ENCODE measurements at regions of chr1 and their contacts with region 1.

Region 1: GRCh38 chr1:201709564-201710295 is 119.2 kb upstream of the IPO9 start:
- DNase-seq: peak; percentile 87
- H3K4me3 ChIP-seq: no peak overlapping the region
- H3K27ac ChIP-seq: peak overlapping the region; percentile 62 to 98; a peak in 3 of 4 replicates
- H3K4me1 ChIP-seq: peaks cover 19 to 71% of the 10 kb centered on the region in 2 experiments; a peak in 3 of 4 replicates
- H3K27me3 ChIP-seq: no peaks in the 10 kb centered on the region
- CTCF ChIP-seq: peak; percentile 86
- EP300 ChIP-seq: no peak
- RAD21 ChIP-seq: peak; percentile 86

Region 2: DNA sequence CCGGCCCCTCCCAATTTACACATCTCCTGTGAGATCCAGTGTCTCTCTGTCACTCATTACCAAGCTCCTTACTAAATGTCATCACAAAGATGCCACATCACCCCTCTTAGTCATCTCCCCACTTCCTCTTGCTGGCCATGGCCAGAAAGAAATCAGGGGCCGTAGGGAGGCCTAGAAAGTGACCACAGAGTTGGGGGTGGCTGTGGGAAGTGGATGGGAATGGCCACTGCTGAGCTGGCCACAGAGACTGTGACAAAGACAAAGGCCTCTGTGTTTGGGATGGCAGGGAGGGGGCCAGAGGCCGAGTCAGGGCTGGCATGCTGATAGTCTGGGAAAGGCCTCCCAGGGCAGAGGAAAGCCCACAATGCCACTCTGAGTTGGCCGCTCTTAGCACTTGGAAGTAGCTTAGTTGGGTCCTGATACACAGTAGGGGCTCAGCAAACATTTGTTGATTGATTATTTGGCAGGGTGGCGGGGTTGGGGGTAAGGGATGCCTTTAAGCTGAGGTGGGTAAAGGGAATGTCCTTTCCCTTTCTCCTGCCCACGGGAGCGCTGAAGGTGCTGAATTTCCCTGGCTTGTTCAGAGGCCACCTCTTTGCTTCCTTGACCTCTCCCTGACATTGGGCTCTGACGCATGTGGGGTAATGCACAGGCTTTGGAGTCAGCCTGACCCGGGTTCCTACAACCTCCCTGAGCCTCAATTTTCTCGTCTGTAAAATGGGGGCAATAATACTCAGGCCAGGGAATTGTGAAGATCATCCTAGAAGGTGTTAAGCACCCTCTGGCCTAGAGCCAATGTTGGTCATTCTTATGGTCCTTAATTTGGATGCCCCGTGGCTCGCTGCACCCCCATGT is 157.6 kb before region 1 on chr1:
- CTCF ChIA-PET with region 1: interaction called, 397 read pairs
- POLR2A ChIA-PET with region 1: no interaction called
- DNase-seq: no peak
- H3K4me3 ChIP-seq: 0 out of 4 replicates have a peak overlapping the region, but pooled peaks of 1 of the 2 experiments have one; percentile 1
- H3K27ac ChIP-seq: peak overlapping the region; percentile 66 to 95
- H3K4me1 ChIP-seq: peaks cover 36 to 53% of the 10 kb centered on the region in 2 experiments
- H3K27me3 ChIP-seq: no peaks in the 10 kb centered on the region
- CTCF ChIP-seq: no peak
- EP300 ChIP-seq: peak in 1 of 2 experiments; percentile 50; a peak in 1 of 4 replicates
- RAD21 ChIP-seq: no peak

Region 3: GRCh38 chr1:201696217-201696761 is 13.4 kb before region 1 on chr1:
- CTCF ChIA-PET with region 1: interaction called, 36 read pairs
- POLR2A ChIA-PET with region 1: no interaction called
- DNase-seq: peak; percentile 76
- H3K4me3 ChIP-seq: no peak overlapping the region
- H3K27ac ChIP-seq: peak overlapping the region; percentile 97
- H3K4me1 ChIP-seq: peaks cover 56 to 67% of the 10 kb centered on the region in 2 experiments
- H3K27me3 ChIP-seq: no peaks in the 10 kb centered on the region
- CTCF ChIP-seq: no peak
- EP300 ChIP-seq: peak; percentile 66 to 70; a peak in 2 of 4 replicates
- RAD21 ChIP-seq: no peak

Region 4: GRCh38 chr1:201748335-201748734 is 38.6 kb after region 1 on chr1:
- CTCF ChIA-PET with region 1: interaction called, 20 read pairs
- POLR2A ChIA-PET with region 1: no interaction called
- DNase-seq: no peak
- H3K4me3 ChIP-seq: no peak overlapping the region
- H3K27ac ChIP-seq: peak overlapping the region; percentile 83 to 98
- H3K4me1 ChIP-seq: peaks cover 35 to 71% of the 10 kb centered on the region in 2 experiments
- H3K27me3 ChIP-seq: no peaks in the 10 kb centered on the region
- CTCF ChIP-seq: no peak
- EP300 ChIP-seq: peak; percentile 10 to 89; a peak in 2 of 4 replicates
- RAD21 ChIP-seq: no peak

Region 5: GRCh38 chr1:201800246-201800645 is 90.5 kb after region 1 on chr1:
- CTCF ChIA-PET with region 1: interaction called, 827 read pairs
- POLR2A ChIA-PET with region 1: no interaction called
- DNase-seq: no peak
- H3K4me3 ChIP-seq: no peak overlapping the region
- H3K27ac ChIP-seq: peak overlapping the region in 1 of 2 experiments; percentile 14; a peak in 1 of 4 replicates
- H3K4me1 ChIP-seq: no peaks in the 10 kb centered on the region
- H3K27me3 ChIP-seq: no peaks in the 10 kb centered on the region
- CTCF ChIP-seq: no peak
- EP300 ChIP-seq: no peak
- RAD21 ChIP-seq: no peak

Region 6: DNA sequence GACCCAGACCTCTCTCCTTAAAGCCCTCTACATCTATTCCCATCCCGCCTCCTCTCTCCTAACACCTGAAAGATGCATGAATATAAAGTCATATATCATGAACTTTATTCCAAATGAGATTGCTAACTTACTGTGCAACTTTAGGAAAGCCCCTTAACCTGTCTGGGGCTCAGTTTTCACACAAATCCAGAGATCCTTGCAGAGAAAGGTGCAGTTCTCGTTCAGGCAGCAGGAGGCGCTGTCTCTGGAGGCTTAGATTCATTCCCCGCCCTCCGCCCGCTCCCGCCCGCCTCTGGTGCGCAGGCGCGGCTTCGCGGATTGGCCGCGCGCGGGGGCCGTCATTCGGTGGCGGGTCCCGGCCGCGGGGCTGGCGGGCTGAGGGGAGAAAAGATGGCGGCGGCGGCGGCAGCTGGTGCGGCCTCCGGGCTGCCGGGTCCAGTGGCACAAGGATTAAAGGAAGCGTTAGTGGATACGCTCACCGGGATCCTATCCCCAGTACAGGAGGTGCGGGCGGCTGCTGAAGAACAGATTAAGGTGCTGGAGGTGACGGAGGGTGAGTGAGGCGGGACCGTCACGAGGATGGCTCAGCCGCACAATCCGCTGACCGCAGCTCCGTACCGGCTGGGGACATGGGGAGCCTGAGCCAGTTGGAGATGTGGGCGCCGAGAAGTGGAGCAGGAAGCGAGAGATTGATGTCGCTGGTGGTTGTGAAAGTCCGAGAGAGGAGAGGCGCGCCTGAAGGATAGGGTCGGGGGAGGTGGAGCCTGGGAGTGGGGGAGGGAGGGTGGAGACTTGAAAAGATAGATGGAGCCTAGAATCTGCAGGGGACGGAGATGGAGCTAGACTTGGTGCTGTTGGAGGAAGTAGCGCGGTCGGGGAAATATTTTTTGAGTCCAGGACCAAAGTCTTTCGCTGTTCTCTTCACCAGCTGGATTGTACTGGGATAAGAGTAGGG is 119.4 kb after region 1 on chr1 and contains the start of gene IPO9:
- CTCF ChIA-PET with region 1: interaction called, 12 read pairs
- POLR2A ChIA-PET with region 1: no interaction called
- DNase-seq: peak; percentile 99
- H3K4me3 ChIP-seq: peak within 1 kb of the TSS; percentile 92 to 97
- H3K27ac ChIP-seq: peak within 1 kb of the TSS; percentile 93 to 95
- H3K4me1 ChIP-seq: peaks cover 12 to 41% of the 10 kb centered on the region in 2 experiments
- H3K27me3 ChIP-seq: no peaks in the 10 kb centered on the region
- CTCF ChIP-seq: peak; percentile 92
- EP300 ChIP-seq: no peak; a peak in 1 of 4 replicates
- RAD21 ChIP-seq: peak; percentile 40
- polyA plus RNA-seq, gene IPO9: 24.5 and 30.7 TPM in 2 replicates